Esophagus muscularis mucosa (tissue), 4 donors: ENCODE measurements at regions of chr15 and their contacts with region 1.

Region 1: DNA sequence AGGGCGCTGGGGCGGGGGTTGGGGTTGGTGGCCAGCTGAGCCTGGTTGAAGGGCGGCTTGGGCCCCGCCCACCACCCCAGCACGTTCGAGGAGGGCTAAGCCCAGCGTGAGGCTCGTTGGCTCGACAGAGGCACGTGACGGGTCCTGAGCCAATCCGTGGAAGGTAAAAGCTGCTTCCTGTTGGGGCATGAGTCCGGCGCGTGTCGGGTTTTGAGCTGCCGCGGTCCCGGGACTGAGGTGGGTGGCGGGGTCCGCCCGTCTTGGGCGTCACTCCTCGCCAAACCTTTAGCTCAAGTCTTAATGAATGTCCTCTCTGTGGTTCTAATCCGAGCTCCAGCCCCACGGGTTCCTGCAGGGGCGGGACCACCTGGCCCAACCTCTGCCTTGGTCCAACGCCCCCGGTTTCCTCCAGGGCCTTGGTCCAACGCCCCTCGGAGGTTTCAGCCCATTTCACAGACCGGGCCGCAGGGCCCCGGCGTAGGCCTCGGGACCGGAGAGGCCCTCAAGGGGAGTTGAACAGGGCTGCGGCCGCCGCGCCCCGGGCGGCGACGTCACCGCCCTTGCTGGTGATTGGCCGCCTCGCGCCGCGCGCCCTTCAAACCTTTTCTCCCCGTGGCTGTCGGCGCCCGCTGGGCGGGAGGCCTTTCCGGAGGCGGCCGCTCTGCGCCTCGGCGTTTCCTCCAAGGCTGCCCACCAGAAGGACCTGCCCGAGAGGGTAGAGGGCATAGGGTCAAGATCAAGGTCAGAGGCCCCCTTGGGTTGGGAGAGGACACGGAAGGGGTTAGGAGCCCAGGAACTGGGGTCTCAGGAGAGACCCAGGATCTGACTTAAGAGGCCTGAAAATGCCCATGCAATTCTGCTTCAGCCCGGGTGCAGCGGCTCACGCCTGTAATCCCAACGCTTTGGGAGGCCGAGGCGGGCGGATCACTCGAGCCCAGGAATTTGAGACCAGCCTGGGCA is at the start of gene RCCD1:
- DNase-seq: peak; percentile 99
- H3K4me3 ChIP-seq: peak within 1 kb of the TSS; percentile 61 to 80 (median 72)
- H3K27ac ChIP-seq: peak within 1 kb of the TSS; percentile 84 to 96 (median 92)
- H3K4me1 ChIP-seq: peaks cover 29 to 52% (median 48%) of the 10 kb centered on the region in 4 donors
- H3K27me3 ChIP-seq: no peaks in the 10 kb centered on the region
- CTCF ChIP-seq: no peak
- EP300 ChIP-seq: peak; percentile 12
- POLR2A ChIP-seq: peak; percentile 65
- total RNA-seq, gene RCCD1: 5.3 to 12.7 (median 9.2) TPM

Region 2: DNA sequence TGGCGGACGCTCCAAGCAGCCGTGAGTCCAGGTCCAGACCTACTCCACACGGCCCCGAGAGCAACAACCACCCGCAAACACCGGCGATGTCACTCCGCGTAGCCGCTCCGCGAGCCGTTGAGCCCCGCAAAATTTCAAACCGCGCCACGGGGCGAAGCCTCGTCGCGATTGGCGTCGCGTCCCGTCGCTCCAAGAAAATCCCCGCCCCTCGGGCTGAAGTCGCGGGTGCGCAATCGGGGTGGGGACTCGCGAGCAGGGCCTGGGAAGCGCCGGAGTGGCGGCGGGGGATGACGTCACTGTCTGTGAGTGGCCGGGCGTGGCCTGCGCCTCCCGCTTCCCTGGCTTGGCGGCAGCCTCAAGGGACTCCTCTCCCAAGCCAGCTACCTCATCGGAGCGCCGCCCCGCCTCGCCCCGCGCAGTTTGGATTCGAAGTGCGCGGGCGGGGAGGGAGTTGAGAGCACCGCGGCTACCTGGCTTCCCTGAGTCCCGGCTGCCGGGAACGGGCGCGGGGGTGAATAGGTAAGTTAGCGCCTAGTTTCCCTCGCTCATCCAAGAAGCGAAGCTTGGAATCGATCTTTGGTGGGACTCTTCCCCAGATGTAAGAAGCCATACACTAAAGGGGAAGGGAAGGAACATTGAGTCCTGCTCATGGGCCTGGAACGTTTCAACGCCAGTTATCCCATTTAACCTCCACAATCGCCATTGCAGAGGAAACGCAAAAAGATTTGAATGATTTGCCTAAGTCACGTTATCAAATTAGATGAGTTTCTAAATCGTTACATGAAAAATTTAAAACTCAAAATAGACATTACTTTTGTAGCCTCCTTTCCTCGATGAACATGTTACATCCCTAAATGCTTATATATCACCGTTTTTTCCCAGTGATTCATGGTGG is 39.7 kb after region 1 on chr15 and contains the start of gene PRC1:
- intact Hi-C with region 1: loop called (anchors 5 kb)
- DNase-seq: peak; percentile 99
- H3K4me3 ChIP-seq: peak within 1 kb of the TSS; percentile 79 to 92 (median 87)
- H3K27ac ChIP-seq: peak within 1 kb of the TSS; percentile 88 to 93 (median 89)
- H3K4me1 ChIP-seq: peaks cover 0 to 21% (median 19%) of the 10 kb centered on the region in 4 donors
- H3K27me3 ChIP-seq: no peaks in the 10 kb centered on the region
- CTCF ChIP-seq: no peak
- EP300 ChIP-seq: no peak
- POLR2A ChIP-seq: no peak
- total RNA-seq, gene PRC1: 4.0 to 5.8 (median 4.6) TPM

Region 3: DNA sequence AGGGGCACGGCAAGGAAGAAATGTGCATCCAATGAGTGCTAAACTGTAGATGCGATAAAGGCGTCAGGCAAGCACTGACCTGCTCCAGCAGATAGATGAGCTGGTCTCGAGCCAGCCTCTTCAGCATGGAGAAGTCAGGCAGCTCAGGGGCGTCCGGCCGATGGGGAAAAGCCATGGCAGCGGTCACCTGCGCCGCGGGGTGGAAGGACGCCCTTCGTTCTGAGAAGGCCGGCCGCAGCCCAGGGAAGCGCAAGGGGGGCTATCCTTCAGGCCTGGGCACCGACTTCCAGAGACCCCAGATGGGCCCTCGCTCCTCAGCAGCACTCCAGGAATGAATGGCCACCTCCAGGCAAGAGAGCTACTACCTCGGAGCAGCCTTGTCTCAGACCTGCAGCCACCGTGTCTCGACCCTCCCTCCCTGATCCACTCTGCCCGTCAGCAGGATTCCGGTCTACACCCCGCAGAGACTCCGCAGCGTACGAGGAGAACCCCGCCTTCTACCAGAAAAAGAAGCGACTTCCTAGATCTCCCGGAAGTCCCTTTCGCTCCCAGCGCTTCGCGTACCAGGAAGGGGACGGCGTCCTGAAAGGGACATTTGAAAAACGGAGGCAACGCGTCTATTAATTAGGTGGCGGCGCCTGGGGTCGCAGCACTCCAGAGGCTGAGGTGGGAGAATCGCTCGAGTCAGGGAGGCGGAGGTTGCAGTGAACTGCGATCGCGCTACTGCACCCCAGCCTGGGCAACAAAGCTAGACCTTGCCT is 67.3 kb after region 1 on chr15 and contains the start of gene VPS33B:
- intact Hi-C with region 1: loop called (anchors 10 kb)
- DNase-seq: peak; percentile 93
- H3K4me3 ChIP-seq: peak within 1 kb of the TSS; percentile 75 to 91 (median 86)
- H3K27ac ChIP-seq: peak within 1 kb of the TSS; percentile 69 to 81 (median 78)
- H3K4me1 ChIP-seq: peaks cover 18 to 40% (median 33%) of the 10 kb centered on the region in 4 donors
- H3K27me3 ChIP-seq: no peaks in the 10 kb centered on the region
- CTCF ChIP-seq: peak in 1 of 3 experiments; percentile 10
- EP300 ChIP-seq: no peak
- POLR2A ChIP-seq: no peak
- total RNA-seq, gene VPS33B: 9.5 to 11.4 (median 10.4) TPM

Region 4: GRCh38 chr15:91049378-91050127 is 94.6 kb after region 1 on chr15:
- intact Hi-C with region 1: loop called (anchors 5 kb)
- DNase-seq: no peak
- H3K4me3 ChIP-seq: no peak overlapping the region
- H3K27ac ChIP-seq: no peak overlapping the region
- H3K4me1 ChIP-seq: peaks cover 0 to 8% (median 8%) of the 10 kb centered on the region in 4 donors
- H3K27me3 ChIP-seq: peaks cover 0 to 13% (median 0%) of the 10 kb centered on the region in 4 donors
- CTCF ChIP-seq: peak; percentile 59 to 69 (median 67)
- EP300 ChIP-seq: no peak
- POLR2A ChIP-seq: no peak

Region 5: DNA sequence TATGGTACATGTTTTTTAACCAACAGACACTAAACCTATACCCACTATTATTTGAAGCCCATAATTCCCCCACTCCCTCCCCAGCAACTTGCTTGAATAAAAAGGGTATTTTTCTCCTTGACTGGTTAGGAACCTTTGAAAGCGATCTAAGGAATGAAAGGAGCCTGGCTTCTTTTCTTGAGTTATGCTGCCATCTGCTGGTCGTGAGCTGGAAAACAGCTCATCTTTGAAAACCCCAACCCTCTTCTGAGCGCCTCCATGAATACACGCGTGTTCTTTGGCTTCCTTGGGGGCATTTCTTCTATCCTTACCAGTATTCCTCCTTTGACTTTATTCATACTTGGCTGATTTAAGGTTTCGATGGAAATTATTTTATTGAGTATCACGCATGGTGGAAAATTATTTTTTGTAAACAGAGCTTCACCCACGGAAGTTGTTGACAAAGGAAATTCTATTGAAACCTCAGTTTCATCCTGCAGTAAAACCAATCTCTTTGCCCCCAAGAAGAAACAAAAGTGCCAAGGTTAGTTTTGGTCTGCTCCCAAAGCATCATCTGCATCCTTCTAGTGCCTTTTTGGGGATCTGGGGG is 316.7 kb after region 1 on chr15:
- intact Hi-C with region 1: loop called (anchors 2 kb)
- DNase-seq: no peak
- H3K4me3 ChIP-seq: no peak overlapping the region
- H3K27ac ChIP-seq: no peak overlapping the region
- H3K4me1 ChIP-seq: peaks cover 0 to 7% (median 0%) of the 10 kb centered on the region in 4 donors
- H3K27me3 ChIP-seq: no peaks in the 10 kb centered on the region
- CTCF ChIP-seq: peak; percentile 81 to 85 (median 84)
- EP300 ChIP-seq: no peak
- POLR2A ChIP-seq: no peak